Panc1 (cell line): ENCODE measurements at regions of chr4 and their contacts with region 1.

Region 1: DNA sequence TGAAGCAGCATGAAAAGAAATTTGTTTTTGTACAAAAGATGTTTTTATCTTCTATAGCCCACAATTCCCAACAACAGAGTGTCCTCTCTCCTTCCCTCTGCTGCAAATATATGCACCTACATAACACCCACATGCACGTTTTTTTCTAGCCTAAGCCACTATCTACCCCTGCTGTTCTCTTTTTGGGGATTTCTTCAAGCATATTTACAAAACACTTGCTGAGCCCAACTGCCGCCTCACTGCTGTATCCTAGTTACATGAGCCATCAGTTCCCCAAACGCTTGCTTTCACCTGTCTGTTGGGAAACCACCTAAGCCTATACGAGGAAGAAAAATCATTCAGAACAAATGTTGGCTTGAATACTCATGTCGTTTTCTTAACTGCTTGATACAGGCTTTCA is 127.2 kb downstream of the CHRNA9 start:
- DNase-seq: no peak
- ATAC-seq: no peak
- H3K4me3 ChIP-seq: no peak overlapping the region
- H3K27ac ChIP-seq: no peak overlapping the region
- H3K4me1 ChIP-seq: no peaks in the 10 kb centered on the region
- H3K27me3 ChIP-seq: no peaks in the 10 kb centered on the region
- CTCF ChIP-seq: no peak

Region 2: GRCh38 chr4:40199999-40200874 is 262.1 kb before region 1 on chr4:
- CTCF ChIA-PET with region 1: no interaction called
- POLR2A ChIA-PET with region 1: no interaction called
- in situ Hi-C with region 1: no loop called
- intact Hi-C with region 1: no loop called
- DNase-seq: no peak
- ATAC-seq: no peak
- H3K4me3 ChIP-seq: no peak overlapping the region
- H3K27ac ChIP-seq: peak overlapping the region; percentile 77
- H3K4me1 ChIP-seq: peaks cover 5% of the 10 kb centered on the region
- H3K27me3 ChIP-seq: no peaks in the 10 kb centered on the region
- CTCF ChIP-seq: no peak

Region 3: DNA sequence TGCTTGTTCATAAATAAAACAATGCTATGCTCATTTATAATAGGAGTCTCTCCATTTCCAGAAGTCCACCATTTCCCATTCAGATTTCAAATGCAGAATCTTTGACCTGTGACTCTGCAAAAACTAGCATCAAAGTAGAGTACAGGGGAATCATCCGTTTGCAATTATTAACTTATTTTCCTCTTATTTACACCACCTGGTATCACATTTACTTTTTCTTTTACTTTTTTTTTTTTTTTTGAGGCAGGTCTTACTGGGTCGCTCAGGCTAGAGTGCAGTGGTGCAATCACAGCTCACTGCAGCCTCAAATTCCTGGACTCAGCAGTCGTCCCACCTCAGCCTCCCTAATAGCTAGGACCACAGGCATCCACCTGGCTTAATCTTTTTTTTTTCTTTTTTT is 129.7 kb after region 1 on chr4:
- CTCF ChIA-PET with region 1: no interaction called
- POLR2A ChIA-PET with region 1: interaction called, 10 read pairs
- in situ Hi-C with region 1: no loop called
- intact Hi-C with region 1: no loop called
- DNase-seq: no peak
- ATAC-seq: no peak
- H3K4me3 ChIP-seq: no peak overlapping the region
- H3K27ac ChIP-seq: no peak overlapping the region
- H3K4me1 ChIP-seq: no peaks in the 10 kb centered on the region
- H3K27me3 ChIP-seq: no peaks in the 10 kb centered on the region
- CTCF ChIP-seq: no peak